CD8-positive, alpha-beta T cell (primary cell): ENCODE measurements at regions of chr16 and their contacts with region 1.

Region 1: GRCh38 chr16:2023098-2023925 is 3.4 kb upstream of the NHERF2 start:
- DNase-seq: peak; percentile 88 to 100 (median 95)
- ATAC-seq: peak; percentile 95
- H3K4me3 ChIP-seq: peak overlapping the region; percentile 37 to 43
- H3K4me3 Mint-ChIP-seq: peak overlapping the region; percentile 69
- H3K27ac ChIP-seq: peak overlapping the region; percentile 24 to 70
- H3K27ac Mint-ChIP-seq: peak overlapping the region; percentile 70
- H3K4me1 ChIP-seq: peaks cover 32% of the 10 kb centered on the region
- H3K4me1 Mint-ChIP-seq: peaks cover 21% of the 10 kb centered on the region
- H3K27me3 ChIP-seq: peaks cover 0 to 22% of the 10 kb centered on the region in 2 experiments
- H3K27me3 Mint-ChIP-seq: peaks cover 17% of the 10 kb centered on the region
- CTCF ChIP-seq: peak; percentile 89

Region 2: DNA sequence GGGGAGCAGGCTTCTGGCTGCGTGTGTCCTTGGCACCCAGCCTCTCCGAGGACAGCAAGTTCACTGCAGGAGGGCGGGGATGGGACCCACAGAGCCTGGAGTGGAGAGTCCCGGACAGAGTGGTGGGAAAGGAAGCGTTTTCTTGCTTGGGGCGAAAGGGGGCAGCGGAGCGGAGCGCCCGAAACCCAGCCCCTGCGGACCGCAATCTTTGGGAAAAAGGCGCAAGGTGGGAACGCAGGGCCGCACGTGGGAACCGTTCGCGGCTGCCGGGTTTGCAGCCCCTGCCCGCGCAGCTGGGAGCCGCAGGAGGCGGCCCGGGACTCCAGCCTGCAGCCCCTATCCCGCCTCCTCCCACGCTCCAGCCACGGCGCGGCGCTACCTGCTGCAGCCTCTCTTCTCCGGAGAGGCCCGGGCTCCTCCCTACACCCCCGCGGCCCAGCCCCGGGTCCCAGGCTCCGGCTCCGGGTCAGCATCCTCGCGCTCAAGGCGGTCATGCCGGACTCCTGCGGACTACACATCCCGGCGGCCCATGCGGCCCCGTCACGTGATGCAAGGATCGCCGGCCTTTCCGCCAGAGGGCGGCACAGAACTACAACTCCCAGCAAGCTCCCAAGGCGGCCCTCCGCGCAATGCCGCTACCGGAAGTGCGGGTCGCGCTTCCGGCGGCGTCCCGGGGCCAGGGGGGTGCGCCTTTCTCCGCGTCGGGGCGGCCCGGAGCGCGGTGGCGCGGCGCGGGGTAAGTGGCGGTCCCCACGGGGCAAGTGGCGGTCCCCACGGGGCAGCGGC is 24.2 kb after region 1 on chr16 and contains the starts of genes NTHL1 and TSC2:
- CTCF ChIA-PET with region 1: interaction called, 5 read pairs
- POLR2A ChIA-PET with region 1: interaction called, 3 read pairs
- intact Hi-C with region 1: loop called (anchors 1 kb)
- DNase-seq: peak; percentile 82 to 96 (median 92)
- ATAC-seq: peak; percentile 89
- H3K4me3 ChIP-seq: peak within 1 kb of the TSS; percentile 90 to 93
- H3K4me3 Mint-ChIP-seq: peak within 1 kb of the TSS; percentile 91
- H3K27ac ChIP-seq: peak within 1 kb of the TSS; percentile 60 to 64
- H3K27ac Mint-ChIP-seq: peak within 1 kb of the TSS; percentile 62
- H3K4me1 ChIP-seq: peaks cover 17% of the 10 kb centered on the region
- H3K4me1 Mint-ChIP-seq: peaks cover 24% of the 10 kb centered on the region
- H3K27me3 ChIP-seq: no peaks in the 10 kb centered on the region
- H3K27me3 Mint-ChIP-seq: no peaks in the 10 kb centered on the region
- CTCF ChIP-seq: peak; percentile 39
- total RNA-seq, gene NTHL1: 1.7 to 2.0 TPM
- total RNA-seq, gene TSC2: 76.2 to 84.1 TPM

Region 3: GRCh38 chr16:2500918-2501750 is 477.8 kb after region 1 on chr16:
- CTCF ChIA-PET with region 1: no interaction called
- POLR2A ChIA-PET with region 1: no interaction called
- intact Hi-C with region 1: loop called in 1 of 2 experiments (anchors 1 kb)
- DNase-seq: peak; percentile 67 to 89 (median 80)
- ATAC-seq: peak; percentile 100
- H3K4me3 ChIP-seq: no peak overlapping the region
- H3K4me3 Mint-ChIP-seq: no peak overlapping the region
- H3K27ac ChIP-seq: no peak overlapping the region
- H3K27ac Mint-ChIP-seq: no peak overlapping the region
- H3K4me1 ChIP-seq: peaks cover 6% of the 10 kb centered on the region
- H3K4me1 Mint-ChIP-seq: peaks cover 2% of the 10 kb centered on the region
- H3K27me3 ChIP-seq: no peaks in the 10 kb centered on the region
- H3K27me3 Mint-ChIP-seq: no peaks in the 10 kb centered on the region
- CTCF ChIP-seq: peak; percentile 87